ENCODE measurements at regions of chr7 and their contacts with region 1.

Region 1: DNA sequence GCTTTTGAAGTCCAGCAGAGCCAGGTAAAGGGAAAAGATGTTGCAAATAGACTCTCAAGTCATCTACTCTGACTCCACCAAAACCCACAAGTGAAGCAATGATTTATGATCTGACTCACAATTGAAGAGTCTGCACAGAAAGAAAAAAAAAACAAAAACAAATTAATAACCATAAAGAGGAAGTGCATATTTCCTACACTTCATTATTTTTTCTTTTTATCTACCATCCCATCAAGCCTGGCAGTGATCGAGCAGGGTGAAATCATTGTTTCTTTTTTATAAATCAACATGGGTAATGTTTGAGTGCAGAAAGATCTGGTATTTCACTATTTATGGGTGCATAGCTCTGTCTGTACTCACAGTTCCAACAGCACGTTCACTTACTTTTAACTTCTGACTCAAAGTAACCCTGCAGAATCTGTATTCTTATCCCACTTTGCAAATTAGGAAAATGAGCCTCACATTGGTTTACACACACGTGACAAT is 829.0 kb downstream of the TNS3 start:
- DNase-seq: peak; percentile 53
- ATAC-seq: peak; percentile 53
- H3K4me3 ChIP-seq: no peak overlapping the region
- H3K27ac ChIP-seq: peak overlapping the region; percentile 55; the same call in 1 of the 2 replicates
- H3K4me1 ChIP-seq: peaks cover 35 to 41% of the 10 kb centered on the region in 2 experiments
- H3K27me3 ChIP-seq: no peaks in the 10 kb centered on the region
- CTCF ChIP-seq: no peak
- POLR2A ChIP-seq: no peak
- RAD21 ChIP-seq: peak; percentile 35; the same call in 1 of the 2 replicates

Region 2: DNA sequence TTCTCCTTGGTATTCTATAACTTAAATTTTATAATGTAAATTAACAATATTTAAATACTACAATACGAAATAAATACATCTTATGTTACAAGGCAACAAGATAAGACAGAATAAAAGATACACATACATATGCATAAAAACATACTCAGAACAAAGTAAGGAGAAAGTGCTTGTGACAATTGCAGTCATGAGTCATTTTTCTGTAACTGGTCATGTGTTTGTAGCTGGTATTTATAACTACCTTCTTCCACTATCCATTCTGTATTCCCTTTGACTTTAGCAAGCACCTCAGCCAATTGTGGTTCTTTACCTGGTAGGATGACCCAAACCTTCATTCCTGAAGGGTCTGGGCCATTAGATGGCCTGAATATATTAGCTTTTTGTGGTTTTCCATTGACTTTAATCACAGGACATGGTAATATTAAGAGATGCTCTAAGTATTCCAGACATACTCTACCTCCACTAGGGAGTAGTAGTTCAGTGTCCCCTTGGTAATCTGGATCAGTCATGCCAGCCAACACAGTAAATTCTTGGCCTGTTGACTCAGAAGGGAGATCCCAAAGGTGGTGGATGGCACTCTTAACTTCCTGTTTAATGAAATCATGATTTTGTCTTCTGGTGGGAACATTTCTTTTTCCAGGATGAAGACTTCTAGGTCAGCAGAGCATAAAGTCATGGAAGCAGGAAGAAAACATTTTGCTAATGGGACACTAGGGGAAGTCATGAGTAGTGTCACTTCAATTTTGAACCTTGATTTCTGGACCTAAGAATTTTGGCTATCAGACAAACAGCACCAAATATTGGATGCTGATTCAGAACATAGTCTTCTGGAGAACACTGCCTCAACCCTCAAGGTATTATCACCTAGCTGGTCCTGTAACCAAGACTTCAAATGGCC is 98.1 kb before region 1 on chr7:
- CTCF ChIA-PET with region 1: no interaction called
- POLR2A ChIA-PET with region 1: no interaction called
- RAD21 ChIA-PET with region 1: no interaction called
- intact Hi-C with region 1: loop called (anchors 5 kb)
- DNase-seq: no peak
- ATAC-seq: no peak
- H3K4me3 ChIP-seq: no peak overlapping the region
- H3K27ac ChIP-seq: no peak overlapping the region
- H3K4me1 ChIP-seq: peaks cover 18 to 33% of the 10 kb centered on the region in 2 experiments
- H3K27me3 ChIP-seq: no peaks in the 10 kb centered on the region
- CTCF ChIP-seq: no peak; a peak in 1 of 6 replicates
- POLR2A ChIP-seq: no peak
- RAD21 ChIP-seq: no peak

Region 3: DNA sequence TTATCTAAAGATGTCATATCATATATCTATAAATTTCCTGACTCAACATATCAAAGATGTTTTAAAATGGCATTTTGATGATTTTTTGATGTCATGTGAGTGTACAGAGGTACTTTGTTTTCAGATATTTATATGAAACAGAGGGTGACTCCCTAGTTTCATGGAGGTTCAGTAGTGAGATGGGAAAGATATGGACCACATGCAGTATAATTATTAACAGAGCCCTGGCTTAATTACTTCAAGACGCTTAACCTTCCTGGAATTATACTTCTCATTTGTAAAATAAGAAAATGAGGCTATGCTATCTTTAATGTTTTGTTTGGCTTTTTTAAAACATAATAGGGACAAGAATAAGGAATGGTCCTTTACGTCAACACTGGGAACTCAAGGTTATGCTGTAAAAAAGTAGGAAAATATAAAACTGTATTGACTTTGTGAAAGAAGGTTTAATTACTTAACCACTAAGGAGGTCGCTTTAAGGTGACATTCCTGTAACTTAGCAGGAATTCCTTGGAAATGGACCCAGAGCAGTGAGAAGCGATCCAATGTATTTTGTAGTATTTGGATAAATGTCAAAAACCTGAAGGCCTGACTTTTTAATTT is 10.9 kb before region 1 on chr7:
- CTCF ChIA-PET with region 1: no interaction called
- POLR2A ChIA-PET with region 1: no interaction called
- RAD21 ChIA-PET with region 1: no interaction called
- intact Hi-C with region 1: no loop called
- DNase-seq: no peak
- ATAC-seq: no peak
- H3K4me3 ChIP-seq: no peak overlapping the region
- H3K27ac ChIP-seq: no peak overlapping the region
- H3K4me1 ChIP-seq: peaks cover 2 to 4% of the 10 kb centered on the region in 2 experiments; a peak in 3 of 4 replicates
- H3K27me3 ChIP-seq: no peaks in the 10 kb centered on the region
- CTCF ChIP-seq: no peak
- POLR2A ChIP-seq: no peak
- RAD21 ChIP-seq: no peak

Measured in HCT116 (cell line).